ENCODE measurements at regions of chr20 and their contacts with region 1.

Region 1: DNA sequence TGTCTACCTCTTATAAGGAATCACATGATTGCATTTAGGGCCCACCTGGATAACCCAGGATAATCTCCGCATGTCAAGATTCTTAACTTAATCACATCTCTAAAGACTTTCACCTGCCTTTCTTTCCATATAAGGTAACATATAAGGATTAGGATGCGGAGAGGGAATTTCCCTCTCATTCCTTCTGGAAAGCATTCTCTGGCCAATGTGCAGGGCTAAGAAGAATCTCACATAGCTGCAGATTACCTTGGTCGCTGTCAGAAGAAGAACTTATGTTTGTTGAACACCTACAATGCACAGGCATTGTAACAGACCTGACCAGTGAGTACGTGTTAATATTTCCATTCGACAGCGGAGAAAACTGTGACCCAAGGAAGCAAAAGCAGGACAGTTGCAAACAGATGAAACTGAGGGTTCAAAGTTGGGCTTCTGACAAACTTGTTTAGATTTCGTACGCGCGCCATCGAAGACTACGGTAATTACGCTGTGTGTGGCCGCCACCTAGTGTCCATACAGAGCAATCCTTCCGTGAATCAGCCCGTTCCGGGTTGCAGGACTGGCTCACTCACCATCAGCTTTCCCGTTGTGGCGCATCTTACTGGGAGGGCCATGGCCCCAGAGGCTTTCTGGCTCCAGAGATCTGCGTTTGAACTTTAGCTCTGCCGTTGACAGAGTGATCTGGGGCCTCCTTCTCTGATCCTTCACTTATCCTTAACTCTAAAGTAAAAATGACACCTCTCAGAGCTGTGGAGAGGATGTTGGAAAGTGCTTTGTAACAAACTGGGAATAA is 9.5 kb downstream of the C20orf202 start:
- DNase-seq: peak; percentile 26 to 80 (median 68)
- ATAC-seq: peak; percentile 93
- H3K4me3 ChIP-seq: no peak overlapping the region
- H3K4me3 Mint-ChIP-seq: no peak overlapping the region
- H3K27ac ChIP-seq: no peak overlapping the region
- H3K27ac Mint-ChIP-seq: no peak overlapping the region
- H3K4me1 ChIP-seq: peaks cover 24% of the 10 kb centered on the region
- H3K4me1 Mint-ChIP-seq: peaks cover 34% of the 10 kb centered on the region
- H3K27me3 ChIP-seq: no peaks in the 10 kb centered on the region
- H3K27me3 Mint-ChIP-seq: peaks cover 8% of the 10 kb centered on the region
- CTCF ChIP-seq: peak; percentile 88

Region 2: GRCh38 chr20:973785-974194 is 239.0 kb before region 1 on chr20:
- CTCF ChIA-PET with region 1: interaction called, 3 read pairs
- POLR2A ChIA-PET with region 1: no interaction called
- intact Hi-C with region 1: loop called in 1 of 2 experiments (anchors 5 kb)
- DNase-seq: peak in 3 of 9 experiments; percentile 17 to 52 (median 38)
- ATAC-seq: peak; percentile 76
- H3K4me3 ChIP-seq: no peak overlapping the region
- H3K4me3 Mint-ChIP-seq: no peak overlapping the region
- H3K27ac ChIP-seq: no peak overlapping the region
- H3K27ac Mint-ChIP-seq: no peak overlapping the region
- H3K4me1 ChIP-seq: no peaks in the 10 kb centered on the region
- H3K4me1 Mint-ChIP-seq: peaks cover 2% of the 10 kb centered on the region
- H3K27me3 ChIP-seq: no peaks in the 10 kb centered on the region
- H3K27me3 Mint-ChIP-seq: peaks cover 9% of the 10 kb centered on the region
- CTCF ChIP-seq: peak; percentile 46

Region 3: DNA sequence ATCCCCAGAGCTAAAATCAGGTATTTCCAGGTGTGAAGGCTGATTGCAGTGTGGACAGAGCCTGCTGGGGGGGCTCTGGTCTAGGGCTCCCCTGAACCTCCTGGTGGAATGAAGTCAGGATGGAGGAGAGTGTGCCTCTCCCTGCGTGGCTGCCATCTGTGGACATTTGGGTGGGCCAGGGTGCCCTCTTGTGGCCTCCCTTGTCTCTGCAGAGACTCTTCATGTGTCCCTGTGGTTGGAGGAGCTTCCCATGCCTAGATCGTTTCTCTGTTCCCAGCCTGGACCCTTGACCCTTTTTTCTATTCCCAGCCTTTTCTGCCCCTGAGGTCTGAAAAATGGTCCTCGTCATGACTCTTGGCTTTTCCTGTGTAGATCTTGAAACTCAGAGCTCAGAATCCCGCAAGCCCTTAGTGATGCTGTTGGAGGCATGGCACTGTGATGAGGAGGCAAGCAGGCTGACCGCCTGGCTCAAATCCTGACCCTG is 104.3 kb before region 1 on chr20:
- CTCF ChIA-PET with region 1: interaction called, 13 read pairs
- POLR2A ChIA-PET with region 1: no interaction called
- intact Hi-C with region 1: loop called (anchors 1 to 2 kb)
- DNase-seq: peak; percentile 22 to 70 (median 52)
- ATAC-seq: peak; percentile 82
- H3K4me3 ChIP-seq: no peak overlapping the region
- H3K4me3 Mint-ChIP-seq: no peak overlapping the region
- H3K27ac ChIP-seq: no peak overlapping the region
- H3K27ac Mint-ChIP-seq: no peak overlapping the region
- H3K4me1 ChIP-seq: no peaks in the 10 kb centered on the region
- H3K4me1 Mint-ChIP-seq: peaks cover 4% of the 10 kb centered on the region
- H3K27me3 ChIP-seq: no peaks in the 10 kb centered on the region
- H3K27me3 Mint-ChIP-seq: no peaks in the 10 kb centered on the region
- CTCF ChIP-seq: peak; percentile 62

Region 4: GRCh38 chr20:1185790-1186334 is 26.9 kb before region 1 on chr20:
- CTCF ChIA-PET with region 1: no interaction called
- POLR2A ChIA-PET with region 1: no interaction called
- intact Hi-C with region 1: no loop called
- DNase-seq: peak in 6 of 9 experiments; percentile 23 to 62 (median 36)
- ATAC-seq: peak; percentile 63
- H3K4me3 ChIP-seq: no peak overlapping the region
- H3K4me3 Mint-ChIP-seq: peak overlapping the region; percentile 68
- H3K27ac ChIP-seq: no peak overlapping the region
- H3K27ac Mint-ChIP-seq: no peak overlapping the region
- H3K4me1 ChIP-seq: no peaks in the 10 kb centered on the region
- H3K4me1 Mint-ChIP-seq: peaks cover 12% of the 10 kb centered on the region
- H3K27me3 ChIP-seq: peaks cover 3 to 9% of the 10 kb centered on the region in 2 experiments
- H3K27me3 Mint-ChIP-seq: peaks cover 21% of the 10 kb centered on the region
- CTCF ChIP-seq: peak; percentile 36

Region 5: DNA sequence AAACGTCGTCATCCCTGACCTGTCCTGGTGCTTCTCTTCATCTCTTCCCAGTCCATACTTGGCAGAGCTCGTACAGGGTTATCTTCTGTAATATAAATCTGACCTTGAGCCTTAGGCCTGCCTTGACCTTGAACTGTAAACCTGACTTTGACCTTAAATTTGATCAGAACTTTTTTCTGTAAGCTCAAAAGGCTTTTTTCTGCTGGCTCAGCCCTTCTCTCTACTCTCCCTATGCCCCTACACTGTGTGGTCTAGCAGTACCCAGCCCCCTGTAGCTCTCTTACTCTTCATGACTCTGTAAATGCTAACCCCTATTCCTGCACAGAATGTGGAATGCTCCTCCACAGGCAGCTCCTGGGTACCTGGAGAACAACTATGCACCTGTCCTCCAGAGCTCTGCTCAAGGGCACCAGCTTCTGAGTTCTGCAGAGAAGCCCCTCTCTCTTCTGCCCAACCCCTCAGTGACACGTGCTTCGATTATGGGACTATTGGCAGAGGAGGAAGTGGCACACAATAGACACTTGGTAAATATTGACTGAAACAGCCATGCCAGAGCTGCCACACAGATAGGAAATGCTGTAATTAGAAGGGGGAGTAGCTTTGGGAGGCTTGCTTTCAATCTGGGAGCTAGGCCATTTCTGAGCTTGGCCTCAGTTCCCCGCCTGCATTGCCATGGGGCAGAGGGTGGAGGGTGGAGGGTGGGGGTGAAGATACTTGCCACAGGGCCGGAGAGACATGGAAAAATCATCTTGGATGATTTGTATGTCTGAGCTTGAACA is 68.7 kb after region 1 on chr20:
- CTCF ChIA-PET with region 1: interaction called, 10 read pairs
- POLR2A ChIA-PET with region 1: no interaction called
- intact Hi-C with region 1: no loop called
- DNase-seq: peak in 1 of 9 experiments; percentile 6
- ATAC-seq: peak; percentile 38
- H3K4me3 ChIP-seq: no peak overlapping the region
- H3K4me3 Mint-ChIP-seq: peak overlapping the region; percentile 40
- H3K27ac ChIP-seq: peak overlapping the region in 1 of 2 experiments; percentile 31
- H3K27ac Mint-ChIP-seq: peak overlapping the region; percentile 72
- H3K4me1 ChIP-seq: peaks cover 64% of the 10 kb centered on the region
- H3K4me1 Mint-ChIP-seq: peaks cover 63% of the 10 kb centered on the region
- H3K27me3 ChIP-seq: no peaks in the 10 kb centered on the region
- H3K27me3 Mint-ChIP-seq: no peaks in the 10 kb centered on the region
- CTCF ChIP-seq: no peak

Region 6: GRCh38 chr20:1357921-1358671 is 145.3 kb after region 1 on chr20:
- CTCF ChIA-PET with region 1: no interaction called
- POLR2A ChIA-PET with region 1: no interaction called
- intact Hi-C with region 1: no loop called
- DNase-seq: no peak
- ATAC-seq: peak; percentile 81
- H3K4me3 ChIP-seq: no peak overlapping the region
- H3K4me3 Mint-ChIP-seq: peak overlapping the region; percentile 32
- H3K27ac ChIP-seq: no peak overlapping the region
- H3K27ac Mint-ChIP-seq: no peak overlapping the region
- H3K4me1 ChIP-seq: peaks cover 24% of the 10 kb centered on the region
- H3K4me1 Mint-ChIP-seq: peaks cover 44% of the 10 kb centered on the region
- H3K27me3 ChIP-seq: no peaks in the 10 kb centered on the region
- H3K27me3 Mint-ChIP-seq: no peaks in the 10 kb centered on the region
- CTCF ChIP-seq: no peak

Measured in CD8-positive, alpha-beta T cell (primary cell).